Endothelial cell of umbilical vein (primary cell): ENCODE measurements at regions of chr3 and their contacts with region 1.

Region 1: GRCh38 chr3:156509189-156510174 is 45.4 kb downstream of the SSR3 start:
- DNase-seq: peak; percentile 80
- H3K4me3 ChIP-seq: no peak overlapping the region
- H3K27ac ChIP-seq: no peak overlapping the region
- H3K4me1 ChIP-seq: peaks cover 3% of the 10 kb centered on the region
- H3K27me3 ChIP-seq: no peaks in the 10 kb centered on the region
- CTCF ChIP-seq: peak; percentile 32 to 35
- POLR2A ChIP-seq: no peak

Region 2: DNA sequence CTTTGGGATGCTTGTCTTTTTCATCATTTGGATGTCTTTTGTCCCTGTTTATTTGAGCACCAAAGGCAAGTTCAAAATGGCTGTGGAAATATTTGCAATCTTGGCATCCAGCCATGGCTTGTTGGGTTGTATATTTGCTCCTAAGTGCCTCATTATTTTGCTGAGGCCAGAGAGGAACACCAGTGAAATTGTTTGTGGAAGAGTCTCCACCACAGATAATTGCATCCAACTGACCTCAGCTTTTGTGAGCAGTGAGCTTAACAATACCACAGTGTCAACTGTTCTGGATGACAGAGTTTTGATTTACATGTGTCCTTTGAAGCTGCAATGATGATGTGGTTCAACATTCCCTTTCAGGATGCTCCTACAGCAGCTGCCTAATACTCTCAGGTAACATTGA is 472.1 kb before region 1 on chr3:
- CTCF ChIA-PET with region 1: interaction called, 4 read pairs
- POLR2A ChIA-PET with region 1: no interaction called
- dilution Hi-C with region 1: no loop called
- intact Hi-C with region 1: loop called (anchors 5 kb)
- DNase-seq: no peak
- H3K4me3 ChIP-seq: no peak overlapping the region
- H3K27ac ChIP-seq: no peak overlapping the region
- H3K4me1 ChIP-seq: no peaks in the 10 kb centered on the region
- H3K27me3 ChIP-seq: peaks cover 0 to 2% of the 10 kb centered on the region in 2 experiments
- CTCF ChIP-seq: no peak
- POLR2A ChIP-seq: no peak

Region 3: DNA sequence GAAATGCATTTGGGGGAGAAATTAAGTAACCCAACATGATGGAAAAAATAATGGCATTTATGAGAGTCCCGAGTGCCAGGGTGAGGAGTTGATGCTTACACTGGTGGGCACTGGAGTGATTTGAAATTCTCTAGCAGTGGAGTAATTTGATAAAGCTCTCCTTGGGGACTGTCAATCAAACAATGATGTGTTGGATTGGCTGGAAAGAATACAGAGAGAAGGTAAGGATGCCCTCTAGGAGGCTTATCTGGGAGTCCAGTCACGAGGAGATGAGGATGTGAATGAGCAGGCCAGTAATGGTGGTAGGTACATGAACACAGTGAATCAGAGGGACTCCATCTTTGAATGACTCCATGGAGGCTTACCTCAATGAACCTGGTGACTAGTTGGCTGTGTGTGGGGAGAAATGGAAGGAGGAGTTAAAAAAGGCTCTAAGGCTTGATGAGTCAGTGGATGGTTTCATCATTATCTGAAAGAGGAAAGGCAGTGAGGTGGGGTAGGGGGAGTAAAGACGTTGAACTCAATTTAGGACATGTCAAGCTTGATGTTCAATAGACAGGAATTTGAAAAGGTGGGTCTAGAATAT is 328.1 kb before region 1 on chr3:
- CTCF ChIA-PET with region 1: interaction called, 267 read pairs
- POLR2A ChIA-PET with region 1: no interaction called
- dilution Hi-C with region 1: no loop called
- intact Hi-C with region 1: no loop called
- DNase-seq: no peak
- H3K4me3 ChIP-seq: no peak overlapping the region
- H3K27ac ChIP-seq: no peak overlapping the region
- H3K4me1 ChIP-seq: no peaks in the 10 kb centered on the region
- H3K27me3 ChIP-seq: no peaks in the 10 kb centered on the region
- CTCF ChIP-seq: no peak
- POLR2A ChIP-seq: no peak

Region 4: GRCh38 chr3:156449712-156450574 is 59.5 kb before region 1 on chr3:
- CTCF ChIA-PET with region 1: interaction called, 155 read pairs
- POLR2A ChIA-PET with region 1: no interaction called
- dilution Hi-C with region 1: no loop called
- intact Hi-C with region 1: loop called (anchors 1 kb)
- DNase-seq: peak; percentile 67
- H3K4me3 ChIP-seq: no peak overlapping the region
- H3K27ac ChIP-seq: no peak overlapping the region
- H3K4me1 ChIP-seq: peaks cover 5% of the 10 kb centered on the region
- H3K27me3 ChIP-seq: no peaks in the 10 kb centered on the region
- CTCF ChIP-seq: peak; percentile 58 to 59
- POLR2A ChIP-seq: no peak

Region 5: DNA sequence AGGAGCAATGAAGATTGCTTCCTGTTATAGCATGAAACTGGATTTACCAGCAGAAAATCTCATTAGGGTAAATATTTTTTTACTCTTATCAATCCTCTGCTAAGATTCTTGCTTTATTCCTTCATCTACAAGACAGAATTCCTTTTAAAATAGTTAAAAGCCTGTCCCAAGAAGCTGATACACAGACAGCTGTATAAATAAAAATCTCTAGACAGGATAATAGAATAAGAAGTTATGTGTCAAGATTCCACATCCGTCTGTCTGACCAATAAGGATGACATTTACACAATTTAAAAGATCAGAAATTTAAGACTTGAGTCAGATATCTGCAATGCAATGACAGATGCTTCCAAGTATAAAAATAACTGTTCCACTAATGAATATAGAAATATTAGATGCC is 12.2 kb before region 1 on chr3:
- CTCF ChIA-PET with region 1: interaction called, 14 read pairs
- POLR2A ChIA-PET with region 1: no interaction called
- dilution Hi-C with region 1: no loop called
- intact Hi-C with region 1: no loop called
- DNase-seq: no peak
- H3K4me3 ChIP-seq: no peak overlapping the region
- H3K27ac ChIP-seq: no peak overlapping the region
- H3K4me1 ChIP-seq: peaks cover 15% of the 10 kb centered on the region
- H3K27me3 ChIP-seq: no peaks in the 10 kb centered on the region
- CTCF ChIP-seq: no peak
- POLR2A ChIP-seq: no peak

Region 6: DNA sequence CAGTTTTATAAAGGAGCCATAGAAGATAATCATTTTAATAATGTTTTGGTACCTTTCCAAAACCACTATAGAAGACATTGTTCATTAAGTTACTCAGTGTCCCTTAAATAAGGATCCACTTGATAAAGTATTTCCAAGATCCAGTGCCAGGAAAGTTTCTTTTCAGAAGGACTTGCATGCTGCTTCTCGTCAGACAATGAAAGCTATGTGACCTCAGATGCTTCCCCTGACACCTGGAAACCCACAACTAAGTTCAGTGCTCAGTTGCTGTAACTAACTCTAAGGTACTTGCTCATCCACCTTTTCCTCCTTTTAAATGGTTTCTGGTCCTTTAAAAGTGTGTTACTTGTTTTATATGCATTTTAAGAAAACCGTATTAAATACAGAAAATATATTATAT is 38.2 kb after region 1 on chr3:
- CTCF ChIA-PET with region 1: interaction called, 14 read pairs
- POLR2A ChIA-PET with region 1: no interaction called
- dilution Hi-C with region 1: no loop called
- intact Hi-C with region 1: no loop called
- DNase-seq: peak; percentile 51
- H3K4me3 ChIP-seq: no peak overlapping the region
- H3K27ac ChIP-seq: peak overlapping the region; percentile 42
- H3K4me1 ChIP-seq: peaks cover 93% of the 10 kb centered on the region
- H3K27me3 ChIP-seq: no peaks in the 10 kb centered on the region
- CTCF ChIP-seq: no peak
- POLR2A ChIP-seq: no peak

Region 7: GRCh38 chr3:156643729-156644389 is 134.4 kb after region 1 on chr3:
- CTCF ChIA-PET with region 1: no interaction called
- POLR2A ChIA-PET with region 1: no interaction called
- dilution Hi-C with region 1: no loop called
- intact Hi-C with region 1: no loop called
- DNase-seq: peak; percentile 3
- H3K4me3 ChIP-seq: no peak overlapping the region
- H3K27ac ChIP-seq: no peak overlapping the region
- H3K4me1 ChIP-seq: no peaks in the 10 kb centered on the region
- H3K27me3 ChIP-seq: peaks cover 0 to 6% of the 10 kb centered on the region in 2 experiments
- CTCF ChIP-seq: no peak
- POLR2A ChIP-seq: no peak